ENCODE measurements at regions of chr17 and their contacts with region 1.

Region 1: DNA sequence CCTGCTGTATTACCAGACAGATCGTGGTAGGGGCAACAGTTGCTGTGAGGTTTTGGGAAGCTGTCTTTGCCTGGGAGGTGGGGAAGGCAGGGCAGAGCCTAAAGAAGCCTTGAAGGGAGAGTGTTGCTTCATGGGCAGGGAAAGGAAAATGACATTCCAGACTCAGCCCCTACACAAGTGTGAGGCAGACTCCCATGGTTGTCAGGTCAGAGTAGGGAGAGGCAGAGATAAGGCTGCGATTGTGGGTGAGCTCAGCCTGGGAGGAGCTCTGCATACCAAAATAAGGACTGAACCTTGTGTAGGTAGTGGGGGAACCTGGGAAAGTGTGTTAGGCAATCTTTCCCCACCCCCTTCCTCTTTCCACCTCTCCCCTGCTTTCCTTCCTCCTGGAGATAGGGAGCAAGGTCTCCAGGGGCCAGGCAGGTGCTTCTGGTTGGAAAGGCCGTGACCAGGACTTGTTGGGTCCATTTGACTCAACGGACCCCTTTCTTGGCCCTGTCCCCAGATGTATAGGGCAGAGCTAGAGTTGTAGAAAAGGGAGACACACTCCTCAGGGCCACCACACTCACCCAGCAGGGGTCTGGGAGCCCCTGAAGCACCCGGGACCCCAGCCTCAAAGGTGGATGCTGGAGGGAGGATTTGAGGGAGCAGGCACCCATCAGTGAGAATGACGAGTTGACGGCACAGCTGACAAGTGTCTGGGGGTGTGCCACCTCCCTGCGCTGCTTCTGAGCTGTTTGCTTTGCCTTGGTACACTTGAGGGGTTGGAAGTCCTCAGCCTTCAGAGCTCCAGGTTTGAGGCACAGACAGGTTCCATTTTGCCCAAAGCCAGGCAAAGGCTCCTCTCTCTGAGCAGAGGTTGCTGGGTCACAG is 18.5 kb upstream of the TOB1 start:
- DNase-seq: peak in 1 of 7 donors; percentile 35
- H3K4me3 ChIP-seq: no peak overlapping the region
- H3K27ac ChIP-seq: peak overlapping the region in 1 of 5 donors; percentile 34
- H3K4me1 ChIP-seq: no peaks in the 10 kb centered on the region
- H3K27me3 ChIP-seq: no peaks in the 10 kb centered on the region
- CTCF ChIP-seq: no peak
- POLR2A ChIP-seq: no peak

Region 2: DNA sequence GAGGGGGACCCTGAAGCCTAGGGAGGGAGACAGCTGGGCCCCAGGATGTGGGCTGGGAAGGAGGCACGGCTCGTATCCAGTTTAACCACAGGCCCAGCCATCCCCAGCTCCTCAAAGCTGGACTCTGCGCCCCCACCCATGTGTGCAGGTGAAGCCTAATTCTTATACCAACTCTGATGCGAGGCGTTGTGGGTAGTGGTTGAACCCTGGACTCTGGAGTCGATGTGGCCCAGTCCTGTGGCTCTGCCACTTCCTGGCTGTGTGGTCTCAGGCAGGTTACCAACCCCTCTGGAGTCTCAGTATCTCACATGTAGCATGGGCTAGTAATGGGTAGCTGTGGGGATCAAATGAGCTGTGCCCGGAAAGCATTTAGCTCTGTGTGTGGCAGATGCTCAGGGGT is 41.8 kb after region 1 on chr17:
- intact Hi-C with region 1: loop called in 1 of 2 experiments (anchors 5 kb)
- DNase-seq: no peak
- H3K4me3 ChIP-seq: no peak overlapping the region
- H3K27ac ChIP-seq: no peak overlapping the region
- H3K4me1 ChIP-seq: peaks cover 9 to 13% of the 10 kb centered on the region in 2 donors
- H3K27me3 ChIP-seq: no peaks in the 10 kb centered on the region
- CTCF ChIP-seq: no peak
- POLR2A ChIP-seq: no peak

Region 3: DNA sequence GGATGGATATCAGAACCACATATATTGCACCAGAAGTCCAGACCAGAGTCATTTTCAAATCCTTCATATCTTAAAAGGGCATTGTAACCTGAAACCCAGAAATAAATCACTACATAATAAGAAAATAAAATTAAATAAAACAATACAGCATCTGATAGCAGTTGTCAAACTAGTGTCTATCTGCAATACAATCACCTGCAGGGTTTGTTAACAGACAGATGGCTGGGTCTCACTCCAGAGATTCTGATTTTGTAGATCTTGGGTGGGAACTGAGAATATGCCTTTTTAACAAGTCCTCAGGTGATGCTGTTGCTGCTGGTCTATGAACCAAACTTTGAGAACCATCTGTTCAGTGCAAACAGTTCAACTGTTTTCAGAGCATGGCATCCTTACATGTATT is 319.2 kb after region 1 on chr17:
- intact Hi-C with region 1: no loop called
- DNase-seq: no peak
- H3K4me3 ChIP-seq: no peak overlapping the region
- H3K27ac ChIP-seq: no peak overlapping the region
- H3K4me1 ChIP-seq: no peaks in the 10 kb centered on the region
- H3K27me3 ChIP-seq: no peaks in the 10 kb centered on the region
- CTCF ChIP-seq: no peak
- POLR2A ChIP-seq: no peak

Region 4: DNA sequence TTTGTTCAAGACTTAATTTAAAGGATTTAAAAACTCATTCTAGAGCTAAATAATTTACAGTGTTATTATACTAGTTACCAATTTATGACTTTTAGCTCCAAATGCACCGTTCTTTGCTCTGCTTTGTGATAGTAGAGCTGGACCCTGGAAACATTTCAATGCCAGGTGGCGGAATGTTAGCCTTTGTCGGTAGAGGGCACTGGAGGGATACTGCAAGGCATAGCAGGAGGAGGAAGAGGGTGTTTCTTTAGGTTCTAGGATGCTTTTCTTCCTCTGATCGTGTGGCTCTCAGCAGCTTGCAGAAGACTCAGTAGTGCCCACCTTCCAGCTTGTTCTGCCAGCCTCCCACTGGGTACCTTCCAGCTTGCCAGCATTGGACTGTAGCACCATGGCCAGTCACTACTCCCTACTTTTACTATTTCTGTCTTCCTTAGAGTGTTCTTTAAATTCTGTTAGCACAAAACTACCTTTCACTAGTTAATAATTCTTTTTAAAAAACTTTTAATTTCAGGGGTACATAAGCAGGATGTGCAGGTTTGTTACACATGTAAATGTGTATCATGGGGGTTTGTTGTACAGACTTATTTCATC is 700.9 kb after region 1 on chr17:
- intact Hi-C with region 1: no loop called
- DNase-seq: peak in 3 of 7 donors; percentile 15 to 22 (median 22)
- H3K4me3 ChIP-seq: no peak overlapping the region
- H3K27ac ChIP-seq: no peak overlapping the region
- H3K4me1 ChIP-seq: no peaks in the 10 kb centered on the region
- H3K27me3 ChIP-seq: no peaks in the 10 kb centered on the region
- CTCF ChIP-seq: peak in 5 of 6 experiments; percentile 12 to 42 (median 18)
- POLR2A ChIP-seq: no peak